Calu3 (cell line): ENCODE measurements at regions of chr2 and their contacts with region 1.

Region 1: GRCh38 chr2:127165539-127165935 is 54.6 kb downstream of the CYP27C1 start:
- DNase-seq: peak; percentile 41
- H3K4me3 Mint-ChIP-seq: no peak overlapping the region
- H3K27ac Mint-ChIP-seq: peak overlapping the region; percentile 60
- H3K4me1 Mint-ChIP-seq: peaks cover 33% of the 10 kb centered on the region
- H3K27me3 Mint-ChIP-seq: no peaks in the 10 kb centered on the region
- CTCF ChIP-seq: no peak

Region 2: GRCh38 chr2:127106951-127107621 is 58.5 kb before region 1 on chr2 and contains the start of gene BIN1:
- CTCF ChIA-PET with region 1: interaction called, 3 read pairs
- intact Hi-C with region 1: loop called (anchors 10 kb)
- DNase-seq: peak; percentile 94
- H3K4me3 Mint-ChIP-seq: peak within 1 kb of the TSS; percentile 87
- H3K27ac Mint-ChIP-seq: peak within 1 kb of the TSS; percentile 86
- H3K4me1 Mint-ChIP-seq: peaks cover 39% of the 10 kb centered on the region
- H3K27me3 Mint-ChIP-seq: no peaks in the 10 kb centered on the region
- CTCF ChIP-seq: no peak
- total RNA-seq, gene BIN1: 52.8 and 54.7 TPM in 2 replicates

Region 3: GRCh38 chr2:127182626-127183458 is 17.3 kb after region 1 on chr2:
- CTCF ChIA-PET with region 1: interaction called, 11 read pairs
- intact Hi-C with region 1: no loop called
- DNase-seq: no peak
- H3K4me3 Mint-ChIP-seq: no peak overlapping the region
- H3K27ac Mint-ChIP-seq: no peak overlapping the region
- H3K4me1 Mint-ChIP-seq: no peaks in the 10 kb centered on the region
- H3K27me3 Mint-ChIP-seq: peaks cover 32% of the 10 kb centered on the region
- CTCF ChIP-seq: no peak